Activated naive CD8-positive, alpha-beta T cell treated with anti-CD3 and anti-CD28 coated beads, Interleukin-2, amount 10 ng/mL, durations not matched to agents 7 days and 5 days (primary cell): ENCODE measurements at regions of chr11 and their contacts with region 1.

Region 1: GRCh38 chr11:46593550-46594373 is at the start of gene AMBRA1:
- DNase-seq: peak; percentile 84
- ATAC-seq: peak; percentile 88
- H3K4me3 Mint-ChIP-seq: peak within 1 kb of the TSS; percentile 96
- H3K27ac Mint-ChIP-seq: peak within 1 kb of the TSS; percentile 91
- H3K4me1 Mint-ChIP-seq: peaks cover 27% of the 10 kb centered on the region
- H3K27me3 Mint-ChIP-seq: no peaks in the 10 kb centered on the region
- total RNA-seq, gene AMBRA1: 39.1 to 40.5 TPM

Region 2: DNA sequence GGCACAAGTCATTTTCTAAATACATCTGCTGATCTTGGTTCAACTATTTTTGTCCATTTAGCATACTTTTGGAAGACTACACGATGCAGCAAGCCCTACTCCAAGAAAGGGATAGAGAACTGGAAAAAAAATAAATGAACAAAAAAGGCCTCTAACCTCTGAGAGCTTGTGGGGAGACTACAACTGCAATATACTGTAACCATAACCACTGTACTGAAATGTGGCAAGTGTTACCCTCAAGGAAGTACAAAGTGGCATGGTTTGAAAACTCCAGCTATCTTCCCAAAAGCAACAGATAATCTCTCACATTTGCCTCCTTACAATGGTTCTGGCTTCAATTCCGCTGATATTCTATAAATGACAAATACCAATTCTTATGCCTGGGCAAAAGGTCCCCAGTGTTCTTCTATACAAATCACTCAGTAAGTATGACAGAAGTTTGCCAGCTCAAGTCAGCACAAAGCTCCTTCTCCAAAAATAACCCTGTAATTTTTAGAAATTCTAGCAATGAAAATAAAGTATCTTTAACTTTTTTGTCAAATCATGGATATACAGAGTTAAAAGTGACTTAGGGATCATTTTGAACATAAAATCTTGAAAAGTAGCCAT is 22.9 kb before region 1 on chr11:
- POLR2A ChIA-PET with region 1: interaction called, 14 read pairs
- DNase-seq: no peak
- ATAC-seq: peak; percentile 61
- H3K4me3 Mint-ChIP-seq: no peak overlapping the region
- H3K27ac Mint-ChIP-seq: peak overlapping the region; percentile 33
- H3K4me1 Mint-ChIP-seq: peaks cover 19% of the 10 kb centered on the region
- H3K27me3 Mint-ChIP-seq: no peaks in the 10 kb centered on the region